MCF 10A (cell line): ENCODE measurements at regions of chr21 and their contacts with region 1.

Region 1: GRCh38 chr21:17819114-17819876 is at the start of gene C21orf91:
- DNase-seq: peak; percentile 80
- H3K4me3 Mint-ChIP-seq: peak within 1 kb of the TSS; percentile 82
- H3K27ac Mint-ChIP-seq: peak within 1 kb of the TSS; percentile 100
- H3K4me1 Mint-ChIP-seq: peaks cover 6% of the 10 kb centered on the region
- H3K27me3 Mint-ChIP-seq: no peaks in the 10 kb centered on the region
- CTCF ChIP-seq: no peak
- total RNA-seq, gene C21orf91: 21.0 and 22.1 TPM in 2 replicates

Region 2: DNA sequence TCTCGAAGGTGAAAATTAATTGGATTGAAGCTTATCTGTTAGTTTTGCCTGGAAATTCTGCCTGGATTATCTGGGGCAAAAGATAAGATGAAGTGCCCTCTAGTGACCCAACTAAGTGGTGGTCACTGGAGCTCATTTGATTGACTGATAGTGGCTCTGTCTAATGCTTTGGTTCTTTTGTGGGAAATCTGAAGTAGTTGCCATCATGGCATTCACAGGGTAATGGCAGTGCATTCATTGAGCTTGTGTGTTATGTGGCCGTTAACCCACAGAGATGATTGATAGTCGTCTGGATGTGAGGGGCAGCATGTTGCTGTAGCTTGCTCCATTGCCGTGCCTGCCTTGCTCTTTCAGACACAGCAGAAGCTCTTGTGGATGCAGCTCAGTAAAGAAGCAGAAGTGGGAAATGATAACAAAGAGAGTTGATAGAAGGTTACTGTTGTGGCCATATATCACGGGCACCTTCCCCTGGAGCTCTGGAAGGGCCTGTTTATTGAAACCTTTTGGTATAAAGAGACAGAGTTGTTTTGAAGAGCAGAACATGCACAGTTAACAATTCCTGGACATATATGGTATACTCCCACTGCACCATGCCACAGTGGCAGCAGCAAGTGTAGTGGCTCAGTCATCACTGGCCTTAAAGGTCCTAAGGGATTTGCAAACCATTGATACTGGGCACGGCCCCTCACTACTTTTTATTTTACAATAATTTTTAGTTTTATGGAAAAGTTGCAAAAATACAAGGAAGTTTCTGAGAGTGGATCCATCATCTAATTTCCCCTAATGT is 264.4 kb before region 1 on chr21:
- CTCF ChIA-PET with region 1: no interaction called
- POLR2A ChIA-PET with region 1: no interaction called
- intact Hi-C with region 1: no loop called
- DNase-seq: peak; percentile 35
- H3K4me3 Mint-ChIP-seq: no peak overlapping the region
- H3K27ac Mint-ChIP-seq: no peak overlapping the region
- H3K4me1 Mint-ChIP-seq: peaks cover 11% of the 10 kb centered on the region
- H3K27me3 Mint-ChIP-seq: no peaks in the 10 kb centered on the region
- CTCF ChIP-seq: peak; percentile 26

Region 3: GRCh38 chr21:17679002-17679600 is 140.2 kb before region 1 on chr21:
- CTCF ChIA-PET with region 1: interaction called, 4 read pairs
- POLR2A ChIA-PET with region 1: interaction called, 24 read pairs
- intact Hi-C with region 1: loop called (anchors 2 kb)
- DNase-seq: peak; percentile 73
- H3K4me3 Mint-ChIP-seq: no peak overlapping the region
- H3K27ac Mint-ChIP-seq: no peak overlapping the region
- H3K4me1 Mint-ChIP-seq: no peaks in the 10 kb centered on the region
- H3K27me3 Mint-ChIP-seq: no peaks in the 10 kb centered on the region
- CTCF ChIP-seq: peak; percentile 80

Region 4: GRCh38 chr21:17768840-17769446 is 50.4 kb before region 1 on chr21:
- CTCF ChIA-PET with region 1: interaction called, 3 read pairs
- POLR2A ChIA-PET with region 1: interaction called, 10 read pairs
- intact Hi-C with region 1: no loop called
- DNase-seq: peak; percentile 13
- H3K4me3 Mint-ChIP-seq: no peak overlapping the region
- H3K27ac Mint-ChIP-seq: peak overlapping the region; percentile 82
- H3K4me1 Mint-ChIP-seq: peaks cover 14% of the 10 kb centered on the region
- H3K27me3 Mint-ChIP-seq: no peaks in the 10 kb centered on the region
- CTCF ChIP-seq: no peak

Region 5: GRCh38 chr21:17848228-17848627 is 28.9 kb after region 1 on chr21:
- CTCF ChIA-PET with region 1: interaction called, 5 read pairs
- POLR2A ChIA-PET with region 1: interaction called, 55 read pairs
- intact Hi-C with region 1: loop called (anchors 1 kb)
- DNase-seq: peak; percentile 87
- H3K4me3 Mint-ChIP-seq: peak overlapping the region; percentile 17
- H3K27ac Mint-ChIP-seq: peak overlapping the region; percentile 80
- H3K4me1 Mint-ChIP-seq: peaks cover 7% of the 10 kb centered on the region
- H3K27me3 Mint-ChIP-seq: no peaks in the 10 kb centered on the region
- CTCF ChIP-seq: no peak

Region 6: DNA sequence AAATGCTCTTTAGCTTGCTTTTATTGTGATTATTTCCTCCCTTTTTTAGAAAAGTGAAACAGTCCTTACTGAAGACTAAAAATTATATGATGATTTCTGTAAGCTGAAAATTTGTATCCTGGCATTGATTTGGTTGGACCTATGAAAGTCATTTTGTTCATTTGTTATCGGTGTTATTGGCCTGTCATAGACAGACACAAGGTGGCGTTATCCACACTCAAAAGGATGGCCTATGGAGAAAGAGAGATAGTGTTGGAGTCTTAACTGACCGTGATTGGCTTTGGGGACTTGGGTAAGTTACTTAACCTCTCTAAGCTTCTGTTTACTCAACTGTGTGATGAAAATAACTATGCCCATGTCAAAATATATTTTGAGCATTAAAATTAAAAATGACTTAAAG is 221.7 kb after region 1 on chr21:
- CTCF ChIA-PET with region 1: no interaction called
- POLR2A ChIA-PET with region 1: no interaction called
- intact Hi-C with region 1: no loop called
- DNase-seq: peak; percentile 73
- H3K4me3 Mint-ChIP-seq: no peak overlapping the region
- H3K27ac Mint-ChIP-seq: no peak overlapping the region
- H3K4me1 Mint-ChIP-seq: no peaks in the 10 kb centered on the region
- H3K27me3 Mint-ChIP-seq: no peaks in the 10 kb centered on the region
- CTCF ChIP-seq: peak; percentile 53